CD8-positive, alpha-beta T cell (primary cell): ENCODE measurements at regions of chr17 and their contacts with region 1.

Region 1: GRCh38 chr17:41930009-41930832 is at the start of gene ODAD4:
- DNase-seq: peak; percentile 93 to 99 (median 97)
- ATAC-seq: peak; percentile 99
- H3K4me3 ChIP-seq: peak within 1 kb of the TSS; percentile 61 to 73
- H3K4me3 Mint-ChIP-seq: peak within 1 kb of the TSS; percentile 94
- H3K27ac ChIP-seq: peak within 1 kb of the TSS; percentile 88 to 92
- H3K27ac Mint-ChIP-seq: peak within 1 kb of the TSS; percentile 93
- H3K4me1 ChIP-seq: peaks cover 12% of the 10 kb centered on the region
- H3K4me1 Mint-ChIP-seq: peaks cover 23% of the 10 kb centered on the region
- H3K27me3 ChIP-seq: no peaks in the 10 kb centered on the region
- H3K27me3 Mint-ChIP-seq: no peaks in the 10 kb centered on the region
- CTCF ChIP-seq: peak; percentile 62
- total RNA-seq, gene ODAD4: 1.1 to 1.6 TPM

Region 2: DNA sequence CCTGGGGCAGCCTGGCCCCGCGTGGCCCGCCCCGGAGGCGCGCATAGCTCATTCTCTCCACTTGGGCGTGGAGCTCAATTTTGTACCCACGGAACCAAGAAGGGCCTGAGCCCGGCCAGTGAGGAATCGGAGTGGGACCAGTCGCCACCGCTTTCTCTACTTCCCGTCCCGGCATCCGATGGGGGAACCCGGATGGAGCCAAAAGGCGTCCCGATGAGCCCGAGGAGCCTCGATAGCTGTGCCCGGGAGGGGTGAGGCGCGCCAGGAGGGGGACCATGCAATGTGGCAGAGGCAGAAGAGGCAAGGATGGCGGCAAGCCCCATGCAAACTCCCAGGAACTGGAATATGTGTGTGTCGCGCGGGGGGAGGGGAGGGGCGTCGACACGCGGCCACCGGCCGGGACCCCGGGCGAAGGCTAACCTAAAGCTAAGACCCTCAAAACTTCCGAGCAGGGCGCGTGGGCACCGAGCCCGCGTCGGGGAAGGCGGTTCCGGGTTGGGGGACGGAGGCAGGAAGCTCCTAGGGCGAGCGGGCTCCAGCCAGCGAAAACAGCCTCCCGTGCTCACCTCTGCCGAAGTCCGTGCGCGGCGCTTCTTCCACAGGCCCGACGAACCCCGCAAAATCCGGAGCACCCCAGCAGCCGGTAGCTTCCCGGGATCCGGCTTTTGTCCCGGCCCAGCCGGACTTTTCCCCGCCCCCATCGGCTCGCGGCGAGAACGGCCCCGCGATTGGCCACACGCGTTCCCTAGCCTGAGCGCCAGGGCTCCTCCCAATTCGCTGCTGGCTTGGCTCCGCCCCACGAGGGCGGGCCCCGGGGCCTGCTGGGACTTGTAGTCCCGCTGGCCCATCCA is 11.7 kb before region 1 on chr17 and contains the start of gene ACLY:
- CTCF ChIA-PET with region 1: no interaction called
- POLR2A ChIA-PET with region 1: interaction called, 11 read pairs
- intact Hi-C with region 1: loop called in 1 of 2 experiments (anchors 1 kb)
- DNase-seq: peak; percentile 89 to 97 (median 95)
- ATAC-seq: peak; percentile 99
- H3K4me3 ChIP-seq: peak within 1 kb of the TSS; percentile 94 to 100
- H3K4me3 Mint-ChIP-seq: peak within 1 kb of the TSS; percentile 90
- H3K27ac ChIP-seq: peak within 1 kb of the TSS; percentile 82 to 86
- H3K27ac Mint-ChIP-seq: peak within 1 kb of the TSS; percentile 81
- H3K4me1 ChIP-seq: peaks cover 17% of the 10 kb centered on the region
- H3K4me1 Mint-ChIP-seq: peaks cover 32% of the 10 kb centered on the region
- H3K27me3 ChIP-seq: no peaks in the 10 kb centered on the region
- H3K27me3 Mint-ChIP-seq: no peaks in the 10 kb centered on the region
- CTCF ChIP-seq: no peak
- total RNA-seq, gene ACLY: 24.9 to 25.0 TPM

Region 3: GRCh38 chr17:42010898-42011516 is 80.8 kb after region 1 on chr17:
- CTCF ChIA-PET with region 1: no interaction called
- POLR2A ChIA-PET with region 1: no interaction called
- intact Hi-C with region 1: no loop called
- DNase-seq: no peak
- ATAC-seq: no peak
- H3K4me3 ChIP-seq: no peak overlapping the region
- H3K4me3 Mint-ChIP-seq: no peak overlapping the region
- H3K27ac ChIP-seq: peak overlapping the region in 1 of 2 experiments; percentile 1
- H3K27ac Mint-ChIP-seq: no peak overlapping the region
- H3K4me1 ChIP-seq: peaks cover 26% of the 10 kb centered on the region
- H3K4me1 Mint-ChIP-seq: peaks cover 60% of the 10 kb centered on the region
- H3K27me3 ChIP-seq: no peaks in the 10 kb centered on the region
- H3K27me3 Mint-ChIP-seq: no peaks in the 10 kb centered on the region
- CTCF ChIP-seq: no peak